Activated CD4-positive, alpha-beta T cell treated with anti-CD3 and anti-CD28 coated beads for 36 hours (primary cell): ENCODE measurements at regions of chrX and their contacts with region 1.

Region 1: DNA sequence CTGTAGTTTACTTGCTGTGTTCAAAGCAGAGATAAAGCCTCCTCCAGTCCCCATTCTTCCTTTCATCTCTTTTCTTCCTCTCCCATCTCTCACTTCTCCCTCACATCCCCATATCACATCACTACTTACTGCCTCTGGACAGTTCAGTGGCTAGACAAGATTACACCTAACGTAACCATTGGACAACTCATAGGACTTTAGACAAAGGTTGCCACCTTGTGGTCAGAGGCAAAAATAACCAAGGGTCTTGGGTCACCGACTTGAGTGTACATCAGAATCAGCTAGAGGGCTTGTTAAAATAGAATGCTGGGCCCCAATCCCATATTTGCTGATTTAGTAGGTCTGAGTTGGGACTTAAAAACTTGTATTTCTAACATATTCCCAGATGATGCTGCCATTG is 109.3 kb upstream of the DGKK start:
- DNase-seq: peak; percentile 26
- ATAC-seq: no peak
- H3K4me3 Mint-ChIP-seq: no peak overlapping the region
- H3K27ac Mint-ChIP-seq: no peak overlapping the region
- H3K4me1 Mint-ChIP-seq: no peaks in the 10 kb centered on the region
- H3K27me3 Mint-ChIP-seq: peaks cover 6% of the 10 kb centered on the region

Region 2: GRCh38 chrX:50100188-50100587 is 479.8 kb before region 1 on chrX:
- CTCF ChIA-PET with region 1: interaction called, 3 read pairs
- POLR2A ChIA-PET with region 1: no interaction called
- intact Hi-C with region 1: loop called (anchors 5 to 10 kb)
- DNase-seq: peak; percentile 4
- ATAC-seq: no peak
- H3K4me3 Mint-ChIP-seq: no peak overlapping the region
- H3K27ac Mint-ChIP-seq: no peak overlapping the region
- H3K4me1 Mint-ChIP-seq: peaks cover 2% of the 10 kb centered on the region
- H3K27me3 Mint-ChIP-seq: no peaks in the 10 kb centered on the region

Region 3: GRCh38 chrX:50198348-50198747 is 381.6 kb before region 1 on chrX:
- CTCF ChIA-PET with region 1: no interaction called
- POLR2A ChIA-PET with region 1: no interaction called
- intact Hi-C with region 1: no loop called
- DNase-seq: no peak
- ATAC-seq: no peak
- H3K4me3 Mint-ChIP-seq: no peak overlapping the region
- H3K27ac Mint-ChIP-seq: no peak overlapping the region
- H3K4me1 Mint-ChIP-seq: no peaks in the 10 kb centered on the region
- H3K27me3 Mint-ChIP-seq: peaks cover 2% of the 10 kb centered on the region